ENCODE measurements at regions of chr3 and their contacts with region 1.

Region 1: GRCh38 chr3:157201648-157202278 is 41.8 kb upstream of the CCNL1 start:
- DNase-seq: peak in 1 of 2 experiments; percentile 69
- H3K4me3 ChIP-seq: no peak overlapping the region
- H3K4me1 ChIP-seq: peaks cover 3% of the 10 kb centered on the region; the same call in 1 of the 2 replicates
- H3K27me3 ChIP-seq: peaks cover 3% of the 10 kb centered on the region; the same call in 1 of the 2 replicates

Region 2: GRCh38 chr3:156174229-156174847 is 1027.4 kb before region 1 on chr3:
- in situ Hi-C with region 1: no loop called
- DNase-seq: no peak
- H3K4me3 ChIP-seq: no peak overlapping the region
- H3K4me1 ChIP-seq: no peaks in the 10 kb centered on the region
- H3K27me3 ChIP-seq: no peaks in the 10 kb centered on the region

Region 3: GRCh38 chr3:157493627-157494550 is 292.1 kb after region 1 on chr3:
- in situ Hi-C with region 1: loop called (anchors 10 kb)
- DNase-seq: no peak
- H3K4me3 ChIP-seq: no peak overlapping the region
- H3K4me1 ChIP-seq: no peaks in the 10 kb centered on the region
- H3K27me3 ChIP-seq: no peaks in the 10 kb centered on the region

Measured in HAP-1 (cell line).